Activated naive CD4-positive, alpha-beta T cell treated with anti-CD3 and anti-CD28 coated beads, Interleukin-2, amount 10 ng/mL, durations not matched to agents 7 days and 5 days (primary cell): ENCODE measurements at regions of chr18 and their contacts with region 1.

Region 1: GRCh38 chr18:59085797-59086196 is 53.9 kb upstream of the SEC11C start:
- DNase-seq: no peak
- H3K4me3 Mint-ChIP-seq: no peak overlapping the region
- H3K27ac Mint-ChIP-seq: no peak overlapping the region
- H3K4me1 Mint-ChIP-seq: no peaks in the 10 kb centered on the region
- H3K27me3 Mint-ChIP-seq: peaks cover 41% of the 10 kb centered on the region

Region 2: DNA sequence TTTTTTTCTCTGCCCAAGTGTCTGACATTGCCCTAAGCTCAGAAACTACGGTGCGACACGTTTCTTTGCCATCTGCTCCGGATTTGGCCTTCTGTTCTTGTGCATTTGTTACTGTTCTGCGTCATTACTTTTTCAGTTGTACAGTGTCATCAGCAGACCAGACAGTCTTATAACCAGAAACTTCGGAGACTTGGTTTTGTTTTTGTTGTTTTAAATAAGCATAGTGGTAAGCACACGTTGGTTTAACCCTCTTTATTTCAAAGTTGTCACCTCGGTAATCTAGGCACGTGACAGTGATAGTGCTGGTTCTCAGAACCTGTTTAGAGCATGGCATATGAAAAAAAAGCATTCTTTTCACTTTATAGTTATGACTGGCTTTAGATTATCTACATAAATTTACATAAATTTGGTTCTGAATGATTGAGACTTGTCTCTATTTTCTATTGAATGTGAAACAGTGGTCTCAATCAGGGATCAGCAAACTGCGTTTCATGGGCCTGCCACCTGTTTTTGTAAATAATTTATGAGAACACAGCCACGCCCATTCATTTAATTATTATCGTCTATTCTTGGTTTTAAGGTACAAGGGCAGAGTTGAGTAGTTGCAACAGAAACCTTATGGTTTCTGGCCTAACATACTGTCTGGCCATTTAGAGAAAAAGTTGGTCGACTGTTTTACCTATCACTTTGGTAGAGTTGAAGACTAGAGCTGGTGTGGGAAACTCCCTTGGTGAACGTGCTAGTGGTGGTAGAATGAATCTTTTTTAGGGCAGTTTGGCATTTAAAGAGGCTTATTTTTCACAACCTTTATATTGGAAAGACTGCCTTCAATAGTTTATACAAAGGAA is 114.6 kb before region 1 on chr18:
- CTCF ChIA-PET with region 1: no interaction called
- DNase-seq: no peak
- H3K4me3 Mint-ChIP-seq: no peak overlapping the region
- H3K27ac Mint-ChIP-seq: no peak overlapping the region
- H3K4me1 Mint-ChIP-seq: no peaks in the 10 kb centered on the region
- H3K27me3 Mint-ChIP-seq: peaks cover 11% of the 10 kb centered on the region

Region 3: DNA sequence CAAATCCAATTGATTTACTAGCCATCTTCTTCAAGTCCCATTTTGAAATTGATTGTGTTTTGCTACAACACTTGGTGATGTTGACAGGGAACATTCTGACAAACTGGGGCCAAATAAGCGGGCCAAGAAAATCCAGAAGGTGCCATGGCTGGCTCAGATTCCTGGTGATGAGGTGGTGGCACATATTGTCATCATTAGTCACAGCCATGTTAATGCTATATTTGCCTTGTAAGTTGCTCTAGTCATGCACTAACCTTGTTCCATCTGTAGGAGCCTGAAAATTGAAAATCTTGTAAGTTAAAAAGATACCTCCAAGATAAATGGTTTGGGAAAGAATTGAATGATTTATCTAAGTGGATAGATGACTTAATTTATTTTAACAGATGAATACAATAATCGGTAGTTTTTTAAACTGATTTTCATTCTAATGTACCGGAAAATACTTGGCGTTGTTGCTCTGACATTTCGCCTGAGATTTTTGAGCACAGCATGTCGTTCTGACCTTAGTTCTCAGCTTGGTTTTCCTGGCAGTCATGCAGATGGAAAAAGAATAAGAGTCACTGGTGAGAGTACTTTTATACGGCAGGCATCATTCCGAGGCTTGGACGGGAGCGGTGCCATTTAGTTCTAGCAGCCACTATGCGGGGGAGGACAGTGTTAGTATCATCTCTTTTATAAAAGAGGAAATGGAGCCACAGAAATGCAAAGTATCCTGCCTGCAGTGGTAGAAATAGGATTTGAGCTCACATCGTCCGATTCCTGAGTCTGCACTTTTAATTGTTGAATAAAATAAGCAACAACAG is 87.2 kb before region 1 on chr18:
- CTCF ChIA-PET with region 1: no interaction called
- DNase-seq: no peak
- H3K4me3 Mint-ChIP-seq: no peak overlapping the region
- H3K27ac Mint-ChIP-seq: no peak overlapping the region
- H3K4me1 Mint-ChIP-seq: no peaks in the 10 kb centered on the region
- H3K27me3 Mint-ChIP-seq: peaks cover 12% of the 10 kb centered on the region

Region 4: DNA sequence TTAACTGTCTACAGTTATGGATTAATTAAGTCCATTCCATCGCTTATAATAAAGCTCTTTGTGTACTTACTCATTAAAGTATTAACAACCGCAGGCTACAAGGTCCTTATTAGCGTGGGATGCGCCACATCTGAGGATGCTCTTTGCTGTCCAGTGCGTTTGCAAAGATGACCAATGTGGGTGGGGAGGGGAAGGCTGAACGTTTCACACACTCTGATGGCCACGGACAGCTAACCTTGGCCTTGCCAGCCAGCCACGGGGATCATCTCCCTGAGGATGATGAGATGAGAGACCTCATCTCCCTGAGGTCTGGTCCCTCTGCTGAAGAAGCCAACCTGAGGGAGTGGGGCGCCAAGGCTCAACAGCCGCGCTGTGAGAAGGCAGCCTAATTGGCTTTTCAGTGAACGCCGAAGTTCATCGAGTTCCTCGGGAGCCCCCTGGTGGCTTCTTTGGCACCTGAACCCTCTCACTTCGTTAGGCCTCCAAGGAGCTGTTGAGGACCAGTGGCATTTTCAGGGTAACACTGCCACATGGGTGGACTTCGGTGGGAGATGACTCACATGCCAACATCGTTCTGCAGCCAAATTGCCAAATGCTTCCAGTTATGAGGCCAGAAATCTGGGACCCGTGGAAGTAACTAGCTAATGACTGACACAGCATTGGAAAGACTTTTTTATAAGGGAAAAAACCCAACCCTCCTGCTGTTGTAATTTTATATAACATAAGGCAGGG is 15.4 kb before region 1 on chr18:
- CTCF ChIA-PET with region 1: interaction called, 55 read pairs
- DNase-seq: peak; percentile 86
- H3K4me3 Mint-ChIP-seq: no peak overlapping the region
- H3K27ac Mint-ChIP-seq: no peak overlapping the region
- H3K4me1 Mint-ChIP-seq: no peaks in the 10 kb centered on the region
- H3K27me3 Mint-ChIP-seq: peaks cover 24% of the 10 kb centered on the region

Region 5: DNA sequence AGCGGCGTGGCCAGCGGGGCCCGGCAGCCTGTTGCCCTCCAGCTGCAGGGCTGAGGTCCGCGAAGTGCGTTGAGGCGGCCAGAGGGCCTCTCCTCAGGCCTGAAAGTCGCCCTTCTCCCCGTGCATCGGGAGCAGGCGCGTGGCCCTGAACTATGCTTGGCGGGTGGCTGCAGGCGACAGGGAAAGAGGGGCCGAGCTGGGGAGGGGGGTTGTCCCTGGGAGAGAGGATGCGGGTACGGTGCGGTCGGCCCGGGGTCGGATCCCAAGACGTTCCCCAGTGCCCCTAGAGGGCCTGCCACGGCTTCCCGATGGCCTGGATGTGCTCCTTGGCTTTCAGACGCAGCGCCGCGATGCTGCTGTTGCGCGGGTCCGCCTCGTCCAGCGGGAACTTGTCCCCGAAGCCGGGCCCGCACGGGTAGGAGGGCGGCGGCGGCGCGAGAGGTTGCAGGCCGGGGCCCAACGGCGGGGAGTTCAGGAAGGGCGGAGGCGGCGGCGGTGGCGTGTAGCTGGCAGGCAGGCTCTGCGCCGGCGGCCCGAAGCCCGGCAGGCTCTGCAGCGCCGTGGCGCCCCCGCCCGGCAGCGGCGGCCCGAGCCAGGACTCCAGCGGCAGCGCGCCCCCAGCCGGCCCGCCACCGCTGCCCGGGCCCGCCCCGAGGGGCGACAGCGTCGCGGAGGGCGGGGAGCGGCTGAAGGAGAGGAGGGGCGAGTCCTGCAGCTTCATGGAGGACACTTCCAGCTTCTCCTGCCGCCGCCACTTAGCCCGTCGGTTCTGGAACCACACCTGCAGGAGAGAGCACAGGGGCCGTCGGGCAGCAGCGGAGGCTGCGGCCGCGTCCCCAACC is 183.1 kb after region 1 on chr18:
- CTCF ChIA-PET with region 1: interaction called, 14 read pairs
- DNase-seq: peak; percentile 61
- H3K4me3 Mint-ChIP-seq: no peak overlapping the region
- H3K27ac Mint-ChIP-seq: peak overlapping the region; percentile 52
- H3K4me1 Mint-ChIP-seq: peaks cover 40% of the 10 kb centered on the region
- H3K27me3 Mint-ChIP-seq: peaks cover 100% of the 10 kb centered on the region

Region 6: DNA sequence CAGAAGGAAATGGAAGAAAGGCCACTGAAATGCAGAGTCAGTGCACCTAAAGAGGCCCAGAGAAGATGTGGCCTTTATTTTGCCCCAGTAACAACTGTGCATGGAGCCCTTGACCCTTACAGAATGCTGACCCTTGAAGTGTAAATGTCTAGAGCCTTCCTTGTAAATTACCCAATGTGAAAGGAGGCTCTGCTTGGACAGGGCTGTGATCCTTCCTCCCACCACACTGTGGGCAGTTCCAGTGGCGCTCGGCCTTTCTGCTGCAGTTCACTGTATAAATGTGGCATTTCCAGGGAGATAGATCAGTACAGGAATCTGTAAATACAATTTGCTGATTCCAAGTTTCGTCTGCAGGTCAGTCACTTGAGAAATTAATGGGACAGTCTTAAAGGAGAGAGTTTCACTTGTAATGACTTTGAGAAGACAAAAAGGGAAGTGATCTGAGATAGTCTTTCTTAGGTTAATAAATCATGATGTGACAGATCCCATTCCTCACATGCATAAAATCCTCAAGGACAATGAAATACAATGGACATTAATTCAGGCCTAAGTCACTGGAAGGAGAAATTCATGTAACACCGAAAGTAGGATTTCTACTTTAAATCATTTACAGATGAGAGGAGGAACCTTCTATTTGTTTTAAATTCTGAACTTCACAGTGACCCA is 407.1 kb after region 1 on chr18:
- CTCF ChIA-PET with region 1: no interaction called
- DNase-seq: no peak
- H3K4me3 Mint-ChIP-seq: no peak overlapping the region
- H3K27ac Mint-ChIP-seq: no peak overlapping the region
- H3K4me1 Mint-ChIP-seq: no peaks in the 10 kb centered on the region
- H3K27me3 Mint-ChIP-seq: no peaks in the 10 kb centered on the region